CD4-positive, alpha-beta memory T cell (primary cell): ENCODE measurements at regions of chr6 and their contacts with region 1.

Region 1: DNA sequence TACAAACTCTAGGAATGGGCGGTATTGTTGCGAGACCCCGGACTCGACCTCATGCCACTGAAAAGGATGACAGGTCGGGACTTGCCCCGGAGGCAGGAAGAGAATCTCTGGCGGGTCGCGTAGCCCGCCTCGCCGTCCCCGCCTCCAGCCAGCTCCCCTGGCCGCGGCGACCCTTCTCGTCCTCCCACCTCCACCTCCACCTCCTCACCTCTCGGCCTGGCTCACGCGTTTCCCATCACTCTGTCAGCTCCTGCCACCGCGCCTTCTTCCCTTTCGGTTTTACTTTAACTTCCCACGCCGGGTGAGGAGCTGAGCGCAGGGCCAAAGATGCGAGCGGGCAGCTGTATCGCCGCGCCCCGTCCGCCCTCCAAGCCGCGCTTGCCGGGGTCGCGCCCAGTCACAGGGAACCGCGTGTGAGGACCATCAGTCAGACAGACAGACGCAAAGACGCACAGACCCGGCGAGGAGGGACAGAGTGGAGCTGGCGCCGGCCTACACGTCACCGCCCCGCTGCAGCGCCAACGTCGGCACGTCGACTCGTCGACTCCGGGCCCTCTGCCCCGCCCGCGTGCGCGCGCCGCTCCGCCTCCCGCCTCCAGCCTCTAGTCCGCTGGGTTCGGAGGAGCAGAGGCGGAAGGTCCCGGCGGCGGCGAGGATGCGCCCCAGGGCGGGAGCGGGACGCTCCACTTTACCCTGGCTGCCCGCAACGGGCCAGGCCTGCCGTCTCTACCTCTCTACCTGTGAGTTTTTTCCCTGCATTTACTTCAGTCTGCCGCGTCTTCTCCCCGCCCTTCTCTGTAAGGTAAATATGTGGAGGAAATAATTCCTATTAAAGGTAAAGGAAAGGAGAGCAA is at the start of gene ASCC3:
- DNase-seq: peak; percentile 86 to 90 (median 89)
- H3K4me3 ChIP-seq: peak within 1 kb of the TSS; percentile 62 to 76
- H3K4me3 Mint-ChIP-seq: peak within 1 kb of the TSS; percentile 96 to 100 (median 100)
- H3K27ac ChIP-seq: peak within 1 kb of the TSS; percentile 90
- H3K27ac Mint-ChIP-seq: peak within 1 kb of the TSS; percentile 87 to 100 (median 100)
- H3K4me1 ChIP-seq: peaks cover 43% of the 10 kb centered on the region
- H3K4me1 Mint-ChIP-seq: peaks cover 24 to 53% (median 41%) of the 10 kb centered on the region in 4 donors
- H3K27me3 ChIP-seq: no peaks in the 10 kb centered on the region
- H3K27me3 Mint-ChIP-seq: peaks cover 0 to 2% of the 10 kb centered on the region in 2 donors
- total RNA-seq, gene ASCC3: 54.1 to 57.9 TPM

Region 2: GRCh38 chr6:98947351-98948292 is 1933.5 kb before region 1 on chr6 and contains the start of gene FBXL4:
- CTCF ChIA-PET with region 1: no interaction called
- POLR2A ChIA-PET with region 1: no interaction called
- intact Hi-C with region 1: loop called (anchors 10 kb)
- DNase-seq: peak; percentile 75 to 81 (median 79)
- H3K4me3 ChIP-seq: peak within 1 kb of the TSS; percentile 84 to 85
- H3K4me3 Mint-ChIP-seq: peak within 1 kb of the TSS; percentile 88 to 97 (median 95)
- H3K27ac ChIP-seq: peak within 1 kb of the TSS; percentile 51
- H3K27ac Mint-ChIP-seq: peak within 1 kb of the TSS; percentile 89 to 96 (median 93)
- H3K4me1 ChIP-seq: peaks cover 26% of the 10 kb centered on the region
- H3K4me1 Mint-ChIP-seq: peaks cover 26 to 35% (median 29%) of the 10 kb centered on the region in 4 donors
- H3K27me3 ChIP-seq: no peaks in the 10 kb centered on the region
- H3K27me3 Mint-ChIP-seq: peaks cover 0 to 2% of the 10 kb centered on the region in 2 donors
- total RNA-seq, gene FBXL4: 21.6 to 22.9 TPM

Region 3: GRCh38 chr6:100704961-100705360 is 176.1 kb before region 1 on chr6:
- CTCF ChIA-PET with region 1: no interaction called
- POLR2A ChIA-PET with region 1: no interaction called
- intact Hi-C with region 1: no loop called
- DNase-seq: no peak
- H3K4me3 ChIP-seq: no peak overlapping the region
- H3K4me3 Mint-ChIP-seq: no peak overlapping the region
- H3K27ac ChIP-seq: no peak overlapping the region
- H3K27ac Mint-ChIP-seq: no peak overlapping the region
- H3K4me1 ChIP-seq: no peaks in the 10 kb centered on the region
- H3K4me1 Mint-ChIP-seq: peaks cover 0 to 2% (median 0%) of the 10 kb centered on the region in 4 donors
- H3K27me3 ChIP-seq: no peaks in the 10 kb centered on the region
- H3K27me3 Mint-ChIP-seq: no peaks in the 10 kb centered on the region

Region 4: GRCh38 chr6:101011186-101011585 is 130.1 kb after region 1 on chr6:
- CTCF ChIA-PET with region 1: no interaction called
- POLR2A ChIA-PET with region 1: no interaction called
- intact Hi-C with region 1: loop called (anchors 5 kb)
- DNase-seq: peak in 4 of 5 donors; percentile 26 to 34 (median 28)
- H3K4me3 ChIP-seq: peak overlapping the region in 1 of 2 donors; percentile 42
- H3K4me3 Mint-ChIP-seq: peak overlapping the region; percentile 52 to 87 (median 70)
- H3K27ac ChIP-seq: no peak overlapping the region
- H3K27ac Mint-ChIP-seq: peak overlapping the region; percentile 58 to 90 (median 83)
- H3K4me1 ChIP-seq: peaks cover 20% of the 10 kb centered on the region
- H3K4me1 Mint-ChIP-seq: peaks cover 12 to 21% (median 17%) of the 10 kb centered on the region in 4 donors
- H3K27me3 ChIP-seq: no peaks in the 10 kb centered on the region
- H3K27me3 Mint-ChIP-seq: no peaks in the 10 kb centered on the region